ENCODE measurements at regions of chr12 and their contacts with region 1.

Region 1: GRCh38 chr12:98653866-98654493 is 8.9 kb downstream of the APAF1 start:
- DNase-seq: peak; percentile 71
- H3K4me3 ChIP-seq: no peak overlapping the region
- H3K27ac ChIP-seq: no peak overlapping the region
- H3K4me1 ChIP-seq: no peaks in the 10 kb centered on the region
- CTCF ChIP-seq: peak; percentile 92

Region 2: GRCh38 chr12:98424726-98425401 is 229.1 kb before region 1 on chr12:
- CTCF ChIA-PET with region 1: no interaction called
- POLR2A ChIA-PET with region 1: no interaction called
- intact Hi-C with region 1: loop called (anchors 2 kb)
- DNase-seq: peak; percentile 63
- H3K4me3 ChIP-seq: no peak overlapping the region
- H3K27ac ChIP-seq: no peak overlapping the region
- H3K4me1 ChIP-seq: no peaks in the 10 kb centered on the region
- CTCF ChIP-seq: peak; percentile 91

Region 3: DNA sequence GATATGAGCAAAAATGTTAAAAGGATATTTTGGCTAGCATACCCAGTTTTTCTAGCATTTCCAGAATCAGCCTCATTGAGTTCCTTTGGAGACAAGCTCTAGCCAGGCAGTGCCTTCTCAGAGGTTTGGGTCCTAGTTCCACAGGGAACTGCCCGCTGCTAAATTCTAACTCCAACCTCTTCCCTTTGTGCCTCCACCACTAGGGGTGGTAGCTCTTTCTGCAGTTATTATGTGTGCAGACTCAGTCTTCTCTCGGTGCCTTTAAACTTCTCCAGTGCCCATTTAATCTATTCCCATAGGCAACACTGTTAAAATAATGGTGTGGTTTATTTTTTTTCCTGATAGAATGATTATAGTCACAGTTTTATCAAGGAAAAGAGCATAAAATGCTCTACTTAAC is 82.0 kb before region 1 on chr12:
- CTCF ChIA-PET with region 1: no interaction called
- POLR2A ChIA-PET with region 1: no interaction called
- intact Hi-C with region 1: loop called (anchors 1 kb)
- DNase-seq: peak; percentile 28
- H3K4me3 ChIP-seq: no peak overlapping the region
- H3K27ac ChIP-seq: no peak overlapping the region
- H3K4me1 ChIP-seq: no peaks in the 10 kb centered on the region
- CTCF ChIP-seq: peak; percentile 74

Measured in OCI-LY7 (cell line).